ENCODE measurements at regions of chr15 and their contacts with region 1.

Region 1: DNA sequence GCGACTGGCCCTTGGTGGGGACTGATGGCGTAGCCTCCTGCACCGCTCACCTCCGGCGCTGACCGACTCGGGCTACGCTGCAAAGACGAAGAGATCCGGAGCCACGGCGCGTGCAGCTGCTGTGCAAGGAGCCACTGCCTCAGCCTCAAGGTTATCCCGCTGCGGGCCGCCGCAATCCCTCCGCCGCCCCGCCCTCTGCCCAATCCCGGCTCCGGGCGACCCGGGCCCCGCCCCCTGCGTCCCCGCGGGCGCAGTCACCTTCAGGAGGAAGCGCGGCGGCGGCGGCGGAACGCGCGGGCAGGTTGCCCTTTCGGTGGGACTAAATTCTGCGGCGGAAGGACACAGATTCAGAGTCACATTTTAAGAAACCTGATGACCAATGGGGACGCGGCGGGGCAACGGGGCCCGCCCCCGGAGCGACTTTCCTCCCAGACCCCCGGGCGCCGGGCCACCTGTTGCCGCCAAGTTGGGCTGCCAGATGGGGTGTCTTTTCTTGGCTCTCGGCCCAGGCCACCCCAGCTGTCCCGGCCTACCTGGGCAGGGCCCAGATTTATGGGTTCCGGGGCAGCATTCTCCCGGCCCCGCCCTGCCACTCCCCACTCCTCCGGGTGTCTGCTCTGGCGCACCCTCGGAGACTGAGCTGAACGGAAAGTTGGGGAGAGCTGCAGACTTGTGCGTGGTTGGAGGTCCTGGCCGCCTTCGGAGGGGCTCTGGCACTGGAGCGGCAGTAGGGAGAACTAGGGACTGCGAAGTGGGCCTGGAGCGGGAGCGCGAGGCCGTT is at the start of gene PKM:
- DNase-seq: peak; percentile 98
- H3K4me3 Mint-ChIP-seq: peak within 1 kb of the TSS; percentile 89
- H3K27ac Mint-ChIP-seq: peak within 1 kb of the TSS; percentile 81
- H3K4me1 Mint-ChIP-seq: peaks cover 24% of the 10 kb centered on the region
- H3K27me3 Mint-ChIP-seq: no peaks in the 10 kb centered on the region
- CTCF ChIP-seq: no peak
- total RNA-seq, gene PKM: 612 and 828 TPM in 2 replicates

Region 2: DNA sequence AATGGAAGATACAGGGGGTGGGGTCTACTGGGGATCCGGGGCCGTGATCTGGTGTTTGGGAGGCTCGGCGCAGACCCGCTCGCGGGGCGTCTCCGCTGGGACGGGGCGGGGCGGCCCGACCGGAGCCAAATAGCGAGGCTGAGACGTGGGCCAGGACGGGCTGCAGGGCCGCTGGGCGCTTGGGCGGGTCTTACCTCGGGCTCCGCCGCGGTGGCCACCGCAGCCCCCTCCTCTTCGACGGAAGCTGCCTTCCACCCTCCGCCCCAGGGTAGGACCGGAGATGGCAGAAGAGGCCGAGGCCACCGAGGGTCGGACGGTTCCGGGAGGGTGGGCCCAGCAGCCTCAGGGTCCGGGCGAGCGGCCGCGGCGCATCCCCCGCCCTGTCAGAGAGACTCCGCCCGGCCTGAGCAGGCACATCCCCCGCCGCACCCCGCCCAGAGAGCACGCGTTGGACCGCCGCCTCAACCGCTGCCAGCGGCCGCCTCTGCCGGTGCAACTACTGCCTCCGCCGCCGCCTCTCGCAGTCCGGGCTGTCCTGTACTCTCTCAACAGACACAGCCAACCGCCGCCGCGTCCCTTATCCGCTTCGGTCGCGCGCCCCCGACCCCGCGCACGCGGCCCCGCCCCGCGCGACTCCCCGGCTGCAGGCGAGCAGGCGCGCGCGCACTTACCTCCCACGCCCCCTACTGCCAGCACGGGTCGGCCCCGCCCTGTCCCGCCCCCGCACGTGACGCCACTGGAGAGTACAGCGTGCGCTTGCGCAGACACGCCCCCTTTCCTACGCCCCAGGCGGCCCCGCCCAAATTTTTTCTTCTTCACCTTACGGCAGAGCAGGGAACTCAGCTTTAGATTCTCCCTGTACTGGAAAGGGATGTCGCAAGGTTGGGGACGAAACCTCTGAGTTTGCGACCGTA is 113.5 kb before region 1 on chr15 and contains the start of gene MYO9A:
- CTCF ChIA-PET with region 1: interaction called, 3 read pairs
- POLR2A ChIA-PET with region 1: interaction called, 10 read pairs
- intact Hi-C with region 1: no loop called
- DNase-seq: peak; percentile 98
- H3K4me3 Mint-ChIP-seq: peak within 1 kb of the TSS; percentile 100
- H3K27ac Mint-ChIP-seq: peak within 1 kb of the TSS; percentile 99
- H3K4me1 Mint-ChIP-seq: peaks cover 53% of the 10 kb centered on the region
- H3K27me3 Mint-ChIP-seq: no peaks in the 10 kb centered on the region
- CTCF ChIP-seq: no peak
- total RNA-seq, gene MYO9A: 29.7 and 40.8 TPM in 2 replicates

Region 3: DNA sequence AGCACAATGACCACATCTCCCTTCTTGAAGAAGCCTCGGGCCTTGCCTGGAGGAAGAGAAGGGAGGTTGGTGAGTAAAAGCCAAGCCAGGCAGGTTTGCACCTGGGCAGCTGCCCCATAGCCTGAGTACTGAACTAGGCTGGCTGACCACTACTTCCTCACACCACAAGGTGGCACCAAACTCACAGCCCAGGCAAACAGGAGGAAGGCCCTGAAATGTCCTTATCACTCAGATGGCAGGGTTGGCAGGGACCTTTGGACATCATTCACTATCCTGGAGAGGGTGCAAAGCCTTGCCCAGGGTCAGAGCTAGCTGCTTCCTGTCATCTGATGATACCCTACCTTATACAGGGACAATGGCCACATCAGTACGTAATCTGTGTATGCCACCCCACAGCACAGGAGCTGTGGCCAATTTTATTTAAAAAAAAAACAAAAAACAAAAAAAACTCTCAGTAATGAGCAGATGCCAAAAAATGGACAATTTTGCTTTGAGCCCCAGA is 31.5 kb before region 1 on chr15:
- CTCF ChIA-PET with region 1: interaction called, 29 read pairs
- POLR2A ChIA-PET with region 1: interaction called, 424 read pairs
- intact Hi-C with region 1: loop called (anchors 1 kb)
- DNase-seq: peak; percentile 86
- H3K4me3 Mint-ChIP-seq: no peak overlapping the region
- H3K27ac Mint-ChIP-seq: no peak overlapping the region
- H3K4me1 Mint-ChIP-seq: peaks cover 38% of the 10 kb centered on the region
- H3K27me3 Mint-ChIP-seq: no peaks in the 10 kb centered on the region
- CTCF ChIP-seq: peak; percentile 85

Region 4: DNA sequence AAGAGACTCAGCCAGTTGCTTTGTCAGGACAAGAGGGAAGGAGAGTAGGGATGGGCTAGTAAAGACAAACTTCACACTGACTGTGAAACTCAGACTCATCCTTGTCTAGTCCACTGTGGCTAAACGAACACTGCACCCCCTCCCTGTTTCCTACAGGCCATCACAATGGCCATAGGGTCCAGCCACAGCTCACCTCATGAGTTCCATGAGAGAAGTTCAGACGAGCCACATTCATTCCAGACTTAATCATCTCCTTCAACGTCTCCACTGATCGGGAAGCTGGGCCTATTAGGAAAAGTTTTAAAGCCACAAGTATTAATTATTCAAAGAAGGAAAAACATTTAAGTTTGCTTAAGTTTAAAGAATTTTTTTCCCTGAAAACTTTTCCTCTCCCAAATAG is 14.0 kb before region 1 on chr15:
- CTCF ChIA-PET with region 1: interaction called, 7 read pairs
- POLR2A ChIA-PET with region 1: interaction called, 146 read pairs
- intact Hi-C with region 1: no loop called
- DNase-seq: no peak
- H3K4me3 Mint-ChIP-seq: no peak overlapping the region
- H3K27ac Mint-ChIP-seq: no peak overlapping the region
- H3K4me1 Mint-ChIP-seq: peaks cover 25% of the 10 kb centered on the region
- H3K27me3 Mint-ChIP-seq: no peaks in the 10 kb centered on the region
- CTCF ChIP-seq: no peak

Region 5: GRCh38 chr15:72272213-72273002 is 41.2 kb after region 1 on chr15 and contains the start of gene PARP6:
- CTCF ChIA-PET with region 1: interaction called, 4 read pairs
- POLR2A ChIA-PET with region 1: interaction called, 27 read pairs
- intact Hi-C with region 1: loop called (anchors 1 kb)
- DNase-seq: peak; percentile 96
- H3K4me3 Mint-ChIP-seq: peak within 1 kb of the TSS; percentile 80
- H3K27ac Mint-ChIP-seq: peak within 1 kb of the TSS; percentile 86
- H3K4me1 Mint-ChIP-seq: peaks cover 20% of the 10 kb centered on the region
- H3K27me3 Mint-ChIP-seq: no peaks in the 10 kb centered on the region
- CTCF ChIP-seq: peak; percentile 53
- total RNA-seq, gene PARP6: 117 TPM in 2 replicates

Region 6: GRCh38 chr15:72473614-72474465 is 242.6 kb after region 1 on chr15 and contains the start of gene ARIH1:
- CTCF ChIA-PET with region 1: no interaction called
- POLR2A ChIA-PET with region 1: interaction called, 37 read pairs
- intact Hi-C with region 1: no loop called
- DNase-seq: peak; percentile 94
- H3K4me3 Mint-ChIP-seq: peak within 1 kb of the TSS; percentile 91
- H3K27ac Mint-ChIP-seq: peak within 1 kb of the TSS; percentile 100
- H3K4me1 Mint-ChIP-seq: peaks cover 6% of the 10 kb centered on the region
- H3K27me3 Mint-ChIP-seq: no peaks in the 10 kb centered on the region
- CTCF ChIP-seq: peak; percentile 32
- total RNA-seq, gene ARIH1: 234 and 235 TPM in 2 replicates

Measured in MCF 10A (cell line).